ENCODE measurements at regions of chr4 and their contacts with region 1.

Region 1: DNA sequence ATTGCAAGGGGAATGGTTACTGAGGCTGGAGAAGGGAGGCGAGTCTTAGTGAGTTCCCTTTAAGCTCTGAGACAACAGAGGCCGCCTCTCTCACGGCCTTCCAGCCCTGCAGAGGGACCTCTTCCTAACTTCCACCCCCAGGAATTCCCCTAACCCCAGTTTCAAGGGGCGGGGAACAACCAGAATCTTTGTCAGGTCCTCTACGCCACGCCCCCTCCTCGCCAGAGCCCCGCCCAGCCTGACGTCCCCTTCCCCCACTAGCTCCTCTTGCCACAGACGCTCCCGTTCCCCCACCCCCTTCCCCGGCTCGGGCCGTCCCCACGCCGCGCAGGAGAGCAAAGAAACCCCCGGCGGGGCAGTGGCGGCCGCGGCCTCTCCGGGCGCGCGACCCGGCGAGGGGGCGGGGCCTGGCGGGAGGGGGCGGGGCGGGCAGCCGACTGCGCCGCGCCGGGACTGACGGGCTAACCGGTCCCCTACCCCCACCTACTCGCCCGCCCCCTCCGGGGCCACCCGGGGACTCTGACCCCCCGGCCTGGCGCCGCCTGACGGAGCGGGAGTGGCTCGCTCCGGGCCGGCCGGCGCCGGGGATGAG is 12.3 kb upstream of the TMEM156 start:
- DNase-seq: peak; percentile 99
- H3K4me3 Mint-ChIP-seq: peak overlapping the region; percentile 75
- H3K27ac Mint-ChIP-seq: peak overlapping the region; percentile 88
- H3K4me1 Mint-ChIP-seq: peaks cover 50% of the 10 kb centered on the region
- H3K27me3 Mint-ChIP-seq: no peaks in the 10 kb centered on the region

Region 2: DNA sequence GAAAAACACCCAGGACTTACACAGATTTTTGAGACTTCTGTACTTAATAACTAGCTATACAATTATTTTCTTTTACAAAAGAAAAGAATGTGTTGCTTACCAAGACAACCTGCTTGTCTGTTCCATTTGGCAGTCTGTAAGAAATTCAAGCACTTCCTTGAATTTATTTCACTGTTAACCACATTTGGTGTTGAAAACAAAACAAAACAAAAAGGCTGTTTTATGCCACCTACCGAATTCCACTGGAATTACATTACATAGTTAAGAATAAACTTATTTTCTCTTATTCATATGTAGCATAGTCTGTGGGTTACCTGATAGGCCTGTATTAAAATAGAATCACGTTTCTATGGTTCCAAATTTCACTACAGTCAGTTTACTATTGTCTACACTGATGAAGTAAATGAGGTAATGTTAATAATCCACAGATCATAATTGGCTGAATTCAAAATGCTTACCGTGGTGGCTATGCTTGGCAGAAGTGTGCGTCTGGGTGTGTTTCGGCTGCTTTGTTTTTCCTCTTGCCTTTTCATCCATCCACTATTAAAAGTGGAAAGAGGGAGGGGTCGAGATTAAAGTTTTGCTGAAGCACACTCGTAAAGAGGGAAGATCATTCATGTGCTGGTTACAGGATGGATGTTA is 239.7 kb before region 1 on chr4 and contains the start of gene TLR1:
- CTCF ChIA-PET with region 1: no interaction called
- POLR2A ChIA-PET with region 1: no interaction called
- intact Hi-C with region 1: loop called (anchors 10 kb)
- DNase-seq: peak; percentile 24
- H3K4me3 Mint-ChIP-seq: peak within 1 kb of the TSS; percentile 76
- H3K27ac Mint-ChIP-seq: peak within 1 kb of the TSS; percentile 91
- H3K4me1 Mint-ChIP-seq: peaks cover 35% of the 10 kb centered on the region
- H3K27me3 Mint-ChIP-seq: no peaks in the 10 kb centered on the region
- total RNA-seq, gene TLR1: 1.5 to 1.8 TPM

Region 3: DNA sequence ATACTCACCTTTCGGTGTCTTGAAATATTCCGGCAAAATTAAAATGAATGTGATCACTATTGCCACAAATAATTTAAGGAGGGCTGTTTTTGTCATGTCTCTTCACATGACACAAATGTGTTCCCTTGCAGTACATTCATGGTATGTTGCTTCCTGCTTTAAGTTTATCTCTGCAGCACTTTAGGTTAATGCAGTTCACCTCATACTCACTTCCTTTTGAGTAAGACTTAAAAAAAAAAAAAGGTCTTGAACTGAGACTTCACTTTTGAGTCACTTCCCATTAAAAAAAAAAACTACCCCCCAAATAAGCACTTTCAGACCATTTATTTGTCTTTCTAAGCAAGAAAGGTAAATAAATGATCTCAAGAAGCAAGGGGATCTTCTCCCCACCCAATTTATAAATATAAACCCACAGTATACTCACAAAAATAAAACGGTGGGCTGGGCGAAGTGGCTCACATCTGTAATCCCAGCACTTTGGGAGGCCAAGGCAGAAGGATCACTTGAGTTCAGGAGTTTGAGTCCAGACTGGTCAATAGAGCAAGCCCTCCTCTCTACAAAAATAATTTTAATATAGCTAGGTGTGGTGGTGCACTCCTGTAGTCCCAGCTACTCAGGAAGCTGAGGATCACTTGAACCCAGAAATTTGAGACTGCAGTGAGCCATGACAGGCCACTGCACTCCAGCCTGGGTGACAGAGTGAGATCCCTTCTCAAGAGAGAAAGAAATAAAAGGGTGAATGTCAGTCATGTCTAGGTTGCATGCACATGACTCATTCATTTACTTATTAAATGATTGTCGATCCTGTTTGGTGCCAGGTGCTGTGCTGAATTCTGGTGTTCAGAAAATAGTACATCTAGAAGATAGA is 12.0 kb before region 1 on chr4 and contains the start of gene TMEM156:
- CTCF ChIA-PET with region 1: interaction called, 5 read pairs
- POLR2A ChIA-PET with region 1: interaction called, 75 read pairs
- intact Hi-C with region 1: loop called (anchors 1 kb)
- DNase-seq: peak; percentile 71
- H3K4me3 Mint-ChIP-seq: peak within 1 kb of the TSS; percentile 78
- H3K27ac Mint-ChIP-seq: peak within 1 kb of the TSS; percentile 87
- H3K4me1 Mint-ChIP-seq: peaks cover 47% of the 10 kb centered on the region
- H3K27me3 Mint-ChIP-seq: no peaks in the 10 kb centered on the region
- total RNA-seq, gene TMEM156: 28.0 to 28.4 TPM

Region 4: GRCh38 chr4:39181905-39182638 is 137.6 kb after region 1 on chr4 and contains the start of gene WDR19:
- CTCF ChIA-PET with region 1: no interaction called
- POLR2A ChIA-PET with region 1: no interaction called
- intact Hi-C with region 1: loop called (anchors 1 kb)
- DNase-seq: peak; percentile 99
- H3K4me3 Mint-ChIP-seq: no peak within 1 kb of the TSS
- H3K27ac Mint-ChIP-seq: no peak within 1 kb of the TSS
- H3K4me1 Mint-ChIP-seq: peaks cover 5% of the 10 kb centered on the region
- H3K27me3 Mint-ChIP-seq: no peaks in the 10 kb centered on the region
- total RNA-seq, gene WDR19: 16.4 to 17.9 TPM

Measured in activated CD4-positive, alpha-beta memory T cell treated with anti-CD3 and anti-CD28 coated beads for 36 hours (primary cell).